Activated CD8-positive, alpha-beta T cell treated with anti-CD3 and anti-CD28 coated beads, Interleukin-2, amount 10 ng/mL, durations not matched to agents 7 days and 5 days (primary cell): ENCODE measurements at regions of chr6 and their contacts with region 1.

Region 1: DNA sequence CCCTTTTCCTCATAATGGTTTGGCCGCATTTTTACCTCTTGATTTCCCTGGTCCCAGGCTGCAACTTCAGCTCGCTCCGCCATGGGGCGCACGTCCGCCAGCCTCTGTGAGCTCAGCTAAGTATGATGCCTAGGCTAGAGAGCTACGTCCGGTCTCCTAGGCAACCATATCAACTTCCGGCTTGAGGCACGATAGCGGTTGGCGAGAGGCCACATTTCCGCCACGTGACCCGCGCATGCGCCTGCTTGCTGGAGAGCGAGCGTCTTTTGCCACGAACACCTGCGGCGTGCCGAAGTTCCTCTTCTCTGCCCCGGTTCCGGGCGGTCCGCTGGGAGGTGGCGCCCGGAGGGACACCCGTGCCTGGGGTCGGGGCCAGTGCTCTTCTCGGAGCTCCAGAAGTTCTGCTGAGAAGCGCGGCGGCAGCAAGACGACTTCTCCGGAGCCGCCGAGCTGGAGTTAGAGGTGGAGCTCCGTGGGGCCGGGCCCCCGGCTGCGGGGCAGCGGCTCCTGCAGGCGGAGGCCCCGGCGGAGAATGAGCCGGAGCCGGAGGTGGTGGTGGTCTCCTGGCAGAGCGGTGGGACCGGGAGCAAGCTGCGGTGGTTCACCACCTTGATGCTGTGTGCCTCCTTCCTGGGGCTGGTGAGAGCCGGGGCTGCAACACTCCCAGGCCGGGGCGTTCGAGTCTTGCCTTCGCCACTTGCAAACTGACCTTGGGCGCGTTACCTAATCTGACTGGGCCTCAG is 172.0 kb downstream of the SLC16A10 start:
- DNase-seq: peak; percentile 99
- ATAC-seq: peak; percentile 96
- H3K4me3 Mint-ChIP-seq: peak overlapping the region; percentile 79
- H3K27ac Mint-ChIP-seq: peak overlapping the region; percentile 87
- H3K4me1 Mint-ChIP-seq: peaks cover 30% of the 10 kb centered on the region
- H3K27me3 Mint-ChIP-seq: peaks cover 3% of the 10 kb centered on the region

Region 2: DNA sequence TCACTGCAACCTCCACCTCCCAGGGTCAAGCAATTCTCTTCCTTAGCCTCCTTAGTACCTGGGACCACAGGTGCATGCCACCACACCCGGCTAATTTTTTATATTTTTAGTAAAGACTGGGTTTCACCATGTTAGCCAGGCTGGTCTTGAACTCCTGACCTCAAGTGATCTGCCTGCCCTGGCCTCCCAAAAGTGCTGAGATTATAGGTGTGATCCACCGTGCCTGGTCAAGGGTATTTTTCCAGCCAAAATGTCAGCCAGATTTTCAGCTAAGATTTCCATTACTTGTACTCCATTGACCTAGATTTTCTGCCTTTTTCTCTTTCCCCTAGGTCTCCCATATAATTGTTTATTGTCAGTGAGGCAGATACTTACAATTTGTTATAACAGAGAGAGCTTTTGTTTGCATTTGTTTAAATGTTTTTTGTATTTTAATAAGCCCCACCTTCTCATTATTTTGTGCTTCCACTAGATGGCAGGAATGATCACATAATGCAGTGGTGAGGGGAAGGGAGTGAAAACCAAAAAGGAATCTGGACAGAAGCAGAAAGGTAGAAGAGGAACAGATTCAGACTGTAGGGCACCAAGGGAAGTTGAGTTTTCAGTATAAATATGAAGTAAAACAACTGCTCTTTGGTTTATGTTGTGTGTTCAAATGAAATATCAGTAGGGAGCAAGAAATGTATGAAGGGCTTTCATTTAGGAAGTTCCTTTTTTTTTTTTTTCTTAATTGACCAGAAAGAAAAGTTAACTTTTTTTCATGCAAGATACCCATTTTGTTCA is 247.7 kb before region 1 on chr6:
- CTCF ChIA-PET with region 1: interaction called, 21 read pairs
- POLR2A ChIA-PET with region 1: no interaction called
- DNase-seq: no peak
- ATAC-seq: peak; percentile 69
- H3K4me3 Mint-ChIP-seq: no peak overlapping the region
- H3K27ac Mint-ChIP-seq: no peak overlapping the region
- H3K4me1 Mint-ChIP-seq: peaks cover 4% of the 10 kb centered on the region
- H3K27me3 Mint-ChIP-seq: no peaks in the 10 kb centered on the region

Region 3: GRCh38 chr6:111276338-111277119 is 17.3 kb after region 1 on chr6:
- CTCF ChIA-PET with region 1: interaction called, 13 read pairs
- POLR2A ChIA-PET with region 1: interaction called, 3 read pairs
- DNase-seq: no peak
- ATAC-seq: no peak
- H3K4me3 Mint-ChIP-seq: no peak overlapping the region
- H3K27ac Mint-ChIP-seq: no peak overlapping the region
- H3K4me1 Mint-ChIP-seq: no peaks in the 10 kb centered on the region
- H3K27me3 Mint-ChIP-seq: no peaks in the 10 kb centered on the region

Region 4: GRCh38 chr6:111478749-111479148 is 219.5 kb after region 1 on chr6:
- CTCF ChIA-PET with region 1: interaction called, 129 read pairs
- POLR2A ChIA-PET with region 1: interaction called, 32 read pairs
- DNase-seq: no peak
- ATAC-seq: no peak
- H3K4me3 Mint-ChIP-seq: no peak overlapping the region
- H3K27ac Mint-ChIP-seq: peak overlapping the region; percentile 61
- H3K4me1 Mint-ChIP-seq: peaks cover 33% of the 10 kb centered on the region
- H3K27me3 Mint-ChIP-seq: no peaks in the 10 kb centered on the region

Region 5: DNA sequence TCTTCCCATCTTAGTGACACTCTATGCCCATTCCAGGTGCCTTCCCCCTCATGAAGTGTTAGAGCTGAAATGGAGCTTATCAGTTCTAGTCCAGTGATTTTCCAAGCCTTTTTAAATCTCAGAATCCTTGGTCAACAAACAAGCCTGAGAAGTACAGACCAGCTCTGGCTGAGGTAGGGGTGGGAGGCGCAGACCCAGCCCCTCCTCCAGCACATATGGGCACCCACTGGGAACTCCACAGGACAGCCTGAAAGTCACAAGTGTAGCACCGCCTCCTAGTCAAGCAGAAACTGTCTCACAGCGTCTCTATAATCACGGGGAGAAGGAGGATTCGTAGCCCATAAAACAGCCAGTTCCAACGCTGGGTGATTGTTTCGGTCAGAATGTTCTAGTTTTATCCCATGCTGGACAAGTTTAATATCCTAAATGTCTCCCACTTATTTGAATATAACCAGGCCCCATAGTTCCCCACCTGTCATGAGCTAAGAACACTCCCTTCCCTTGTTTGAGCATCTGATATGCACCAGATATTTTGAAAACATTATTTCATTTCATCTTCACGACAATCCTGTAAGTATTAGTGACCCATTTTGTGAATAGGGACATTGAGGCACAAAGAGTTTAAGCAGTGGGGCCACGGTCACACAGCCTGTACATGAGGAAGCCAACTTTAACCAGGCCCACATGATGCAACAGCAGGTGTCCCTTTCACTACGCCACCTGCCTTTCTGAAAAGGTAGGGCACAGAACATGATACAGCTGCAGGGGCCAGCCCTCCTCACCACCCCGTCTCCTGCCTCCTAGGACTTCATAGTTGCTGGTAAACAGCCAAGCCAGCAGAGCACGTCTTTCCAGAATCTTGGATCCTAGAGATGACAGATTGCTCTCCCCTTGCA is 306.3 kb after region 1 on chr6:
- CTCF ChIA-PET with region 1: interaction called, 13 read pairs
- POLR2A ChIA-PET with region 1: no interaction called
- DNase-seq: peak; percentile 49
- ATAC-seq: peak; percentile 47
- H3K4me3 Mint-ChIP-seq: no peak overlapping the region
- H3K27ac Mint-ChIP-seq: peak overlapping the region; percentile 88
- H3K4me1 Mint-ChIP-seq: peaks cover 48% of the 10 kb centered on the region
- H3K27me3 Mint-ChIP-seq: no peaks in the 10 kb centered on the region

Region 6: GRCh38 chr6:111642463-111643158 is 383.4 kb after region 1 on chr6:
- CTCF ChIA-PET with region 1: interaction called, 31 read pairs
- POLR2A ChIA-PET with region 1: no interaction called
- DNase-seq: peak; percentile 68
- ATAC-seq: peak; percentile 79
- H3K4me3 Mint-ChIP-seq: no peak overlapping the region
- H3K27ac Mint-ChIP-seq: no peak overlapping the region
- H3K4me1 Mint-ChIP-seq: peaks cover 5% of the 10 kb centered on the region
- H3K27me3 Mint-ChIP-seq: no peaks in the 10 kb centered on the region